Motor neuron (in vitro differentiated cells): ENCODE measurements at regions of chr5 and their contacts with region 1.

Region 1: DNA sequence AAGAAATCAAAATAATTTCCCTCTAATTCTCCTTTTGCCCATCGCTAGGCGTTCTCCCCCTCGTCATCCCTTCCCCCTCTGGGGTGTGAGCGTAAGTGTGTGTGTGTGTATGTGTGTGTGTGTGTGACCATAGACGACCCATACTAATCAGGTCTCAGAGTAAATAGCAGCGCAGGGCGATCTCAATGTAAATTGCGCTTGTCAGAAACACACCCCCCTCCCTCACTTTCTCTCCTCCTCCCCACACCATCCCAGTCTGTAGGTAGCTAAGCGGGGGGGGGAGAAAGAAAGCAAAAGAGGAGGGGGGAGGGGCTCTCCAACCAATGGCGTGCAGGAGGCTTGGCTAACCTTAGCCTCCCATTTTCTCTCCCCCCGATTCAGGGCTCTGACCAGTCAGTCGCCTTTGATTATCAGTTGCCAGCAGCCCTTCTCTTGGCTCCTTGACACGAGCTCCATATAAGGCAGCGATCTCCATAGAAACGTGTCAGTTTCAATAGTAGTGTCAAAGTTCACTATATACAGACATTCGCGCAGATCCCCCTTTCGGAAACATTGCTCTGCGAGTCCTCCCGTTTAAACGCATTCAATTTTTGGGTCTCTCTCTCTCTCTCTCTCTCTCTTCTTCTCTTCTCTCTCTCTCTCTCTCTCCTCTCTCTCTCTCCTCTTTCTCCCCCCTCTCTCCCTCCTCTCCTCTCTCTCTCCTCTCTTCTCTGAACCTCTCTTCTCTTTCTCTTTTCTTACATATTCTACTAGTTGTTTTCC is at the start of gene NR2F1:
- ATAC-seq: peak in 7 of 8 experiments; percentile 1 to 75 (median 66)
- H3K4me3 ChIP-seq: peak within 1 kb of the TSS; percentile 80 to 94 (median 88)
- H3K27ac ChIP-seq: peak within 1 kb of the TSS; percentile 93 to 95
- H3K4me1 ChIP-seq: peaks cover 7 to 12% of the 10 kb centered on the region in 2 donors
- total RNA-seq, gene NR2F1: 1.0 to 182 (median 108) TPM

Region 2: DNA sequence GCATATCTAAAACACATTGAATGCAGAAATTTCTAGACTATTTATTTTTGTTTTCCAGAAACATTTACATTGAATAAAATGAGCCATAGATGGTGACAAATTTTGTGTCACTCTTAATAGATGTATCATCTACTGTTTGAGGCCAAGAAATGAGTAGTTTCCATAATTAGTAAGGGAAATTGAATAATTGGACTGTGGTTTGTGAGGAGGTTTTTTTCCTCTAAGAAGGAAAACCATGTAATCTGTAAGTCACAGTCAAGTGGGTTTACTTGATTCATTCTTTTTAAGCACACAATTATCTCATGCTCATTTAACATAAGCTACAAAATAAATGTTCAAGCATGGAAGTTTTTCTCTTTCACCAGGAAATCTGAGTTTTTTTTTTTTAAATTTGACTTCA is 878.3 kb before region 1 on chr5:
- in situ Hi-C with region 1: loop called in 3 of 9 experiments (anchors 25 kb)
- ATAC-seq: no peak
- H3K4me3 ChIP-seq: no peak overlapping the region
- H3K27ac ChIP-seq: no peak overlapping the region
- H3K4me1 ChIP-seq: peaks cover 0 to 8% of the 10 kb centered on the region in 2 donors

Region 3: GRCh38 chr5:93078082-93079038 is 504.5 kb before region 1 on chr5:
- in situ Hi-C with region 1: loop called in 1 of 9 experiments (anchors 25 kb)
- ATAC-seq: peak; percentile 85 to 98 (median 95)
- H3K4me3 ChIP-seq: peak overlapping the region in 1 of 5 donors; percentile 0
- H3K27ac ChIP-seq: peak overlapping the region; percentile 16 to 65
- H3K4me1 ChIP-seq: peaks cover 13 to 23% of the 10 kb centered on the region in 2 donors

Region 4: GRCh38 chr5:93452255-93452654 is 130.6 kb before region 1 on chr5:
- in situ Hi-C with region 1: no loop called
- ATAC-seq: peak in 2 of 8 experiments; percentile 28 to 33
- H3K4me3 ChIP-seq: no peak overlapping the region
- H3K27ac ChIP-seq: no peak overlapping the region
- H3K4me1 ChIP-seq: no peaks in the 10 kb centered on the region

Region 5: GRCh38 chr5:93868851-93869250 is 286.0 kb after region 1 on chr5:
- in situ Hi-C with region 1: no loop called
- ATAC-seq: no peak
- H3K4me3 ChIP-seq: no peak overlapping the region
- H3K27ac ChIP-seq: no peak overlapping the region
- H3K4me1 ChIP-seq: peaks cover 0 to 3% of the 10 kb centered on the region in 2 donors

Region 6: DNA sequence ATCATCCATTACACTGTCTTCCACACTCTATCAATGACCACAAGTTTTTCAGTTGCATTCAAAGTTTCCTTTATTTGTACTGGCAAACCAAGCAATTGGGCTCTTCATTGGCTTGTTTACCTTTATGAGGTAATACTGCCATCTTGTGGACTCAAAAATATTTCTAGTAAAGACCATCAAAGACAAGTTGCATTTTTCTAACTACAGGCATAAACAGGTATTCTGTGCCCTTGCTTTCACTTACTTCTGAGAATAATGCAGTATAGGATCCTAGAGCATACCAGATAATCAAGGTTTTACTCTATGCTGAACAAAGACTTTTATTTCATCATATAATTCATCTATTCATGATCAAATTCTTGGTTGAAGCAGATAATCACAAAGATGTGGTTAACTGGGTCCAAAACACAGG is 332.3 kb after region 1 on chr5:
- in situ Hi-C with region 1: loop called in 1 of 9 experiments (anchors 25 kb)
- ATAC-seq: peak in 3 of 8 experiments; percentile 29 to 54 (median 35)
- H3K4me3 ChIP-seq: no peak overlapping the region
- H3K27ac ChIP-seq: no peak overlapping the region
- H3K4me1 ChIP-seq: peaks cover 6 to 15% of the 10 kb centered on the region in 2 donors

Region 7: DNA sequence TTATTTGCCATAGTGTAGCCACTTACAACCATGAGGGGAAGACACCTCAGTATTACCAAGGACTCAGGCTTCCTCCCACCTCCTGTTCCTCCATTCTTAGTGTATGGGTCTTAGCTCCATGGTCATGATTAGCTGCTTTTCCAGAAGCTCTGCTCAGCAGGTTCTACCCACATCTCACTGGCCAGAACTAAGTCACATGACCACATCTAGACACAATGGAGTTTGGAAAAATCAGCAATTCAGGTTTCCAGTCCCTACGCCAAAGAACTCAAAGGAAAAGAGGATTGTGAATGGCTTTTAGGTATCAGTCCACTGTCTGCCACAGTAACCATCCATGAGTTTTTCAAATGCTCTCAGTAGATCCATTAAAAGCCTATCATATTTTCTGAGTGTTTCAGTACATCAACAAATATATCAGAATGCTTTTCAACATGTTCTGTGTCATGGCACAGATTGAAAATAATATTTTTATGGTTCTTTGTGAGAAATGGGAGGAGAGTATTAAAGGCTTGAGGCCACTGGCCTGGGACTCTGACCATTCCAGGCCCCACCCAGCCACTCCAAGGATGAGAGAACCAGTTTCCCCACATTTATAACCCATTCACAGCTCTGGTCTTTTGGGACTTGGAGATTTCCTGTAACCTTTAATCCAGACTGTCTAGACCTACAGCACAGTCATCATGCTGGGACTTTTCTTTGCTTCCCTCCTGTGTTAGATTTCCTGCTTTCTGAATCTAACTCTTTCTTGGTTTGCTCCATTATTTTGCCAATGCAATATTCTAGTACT is 645.7 kb after region 1 on chr5:
- in situ Hi-C with region 1: no loop called
- ATAC-seq: no peak
- H3K4me3 ChIP-seq: no peak overlapping the region
- H3K27ac ChIP-seq: no peak overlapping the region
- H3K4me1 ChIP-seq: no peaks in the 10 kb centered on the region

Region 8: DNA sequence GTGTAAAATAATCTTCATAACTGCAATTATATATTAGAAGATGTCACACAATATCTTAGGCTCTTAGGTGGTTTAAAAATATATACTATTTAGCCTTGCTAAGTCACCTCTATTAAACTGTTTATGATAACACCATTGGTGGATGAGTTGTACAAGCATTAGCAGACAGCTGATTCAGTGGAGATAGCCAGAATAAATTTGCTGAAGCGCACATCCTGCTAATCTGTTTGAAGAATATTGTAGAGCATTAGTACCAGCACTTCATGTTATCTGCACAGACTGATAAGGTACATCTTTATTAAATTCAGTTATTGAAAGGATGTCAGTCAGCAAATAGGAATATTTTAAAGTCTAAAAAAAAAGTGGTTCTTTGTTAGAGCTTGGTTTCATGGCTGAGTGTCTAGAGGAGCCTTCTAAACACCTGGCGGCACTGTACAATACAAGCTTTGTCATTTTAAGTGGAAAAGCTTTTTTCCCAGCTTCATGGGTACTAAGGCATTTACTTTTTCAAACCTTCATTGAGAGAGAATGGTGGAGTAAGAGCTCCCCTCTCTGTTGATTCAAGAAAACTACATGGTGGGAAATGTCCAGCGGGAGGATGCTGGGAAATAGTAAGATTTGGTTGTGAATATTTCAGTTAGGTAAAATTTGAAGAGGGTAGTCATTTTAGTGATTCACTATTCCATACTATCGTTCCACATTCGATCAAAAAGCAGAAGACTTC is 1310.7 kb after region 1 on chr5:
- in situ Hi-C with region 1: loop called in 1 of 9 experiments (anchors 25 kb)
- ATAC-seq: peak; percentile 25 to 93 (median 85)
- H3K4me3 ChIP-seq: no peak overlapping the region
- H3K27ac ChIP-seq: no peak overlapping the region
- H3K4me1 ChIP-seq: peaks cover 9 to 25% of the 10 kb centered on the region in 2 donors